ENCODE measurements at regions of chr15 and their contacts with region 1.

Region 1: GRCh38 chr15:32956006-32956405 is 238.2 kb downstream of the GREM1 start:
- DNase-seq: no peak
- H3K4me3 ChIP-seq: no peak overlapping the region
- H3K27ac ChIP-seq: no peak overlapping the region
- H3K4me1 ChIP-seq: peaks cover 2% of the 10 kb centered on the region
- H3K27me3 ChIP-seq: no peaks in the 10 kb centered on the region
- CTCF ChIP-seq: peak in 2 of 4 experiments; percentile 22 to 47
- POLR2A ChIP-seq: no peak

Region 2: DNA sequence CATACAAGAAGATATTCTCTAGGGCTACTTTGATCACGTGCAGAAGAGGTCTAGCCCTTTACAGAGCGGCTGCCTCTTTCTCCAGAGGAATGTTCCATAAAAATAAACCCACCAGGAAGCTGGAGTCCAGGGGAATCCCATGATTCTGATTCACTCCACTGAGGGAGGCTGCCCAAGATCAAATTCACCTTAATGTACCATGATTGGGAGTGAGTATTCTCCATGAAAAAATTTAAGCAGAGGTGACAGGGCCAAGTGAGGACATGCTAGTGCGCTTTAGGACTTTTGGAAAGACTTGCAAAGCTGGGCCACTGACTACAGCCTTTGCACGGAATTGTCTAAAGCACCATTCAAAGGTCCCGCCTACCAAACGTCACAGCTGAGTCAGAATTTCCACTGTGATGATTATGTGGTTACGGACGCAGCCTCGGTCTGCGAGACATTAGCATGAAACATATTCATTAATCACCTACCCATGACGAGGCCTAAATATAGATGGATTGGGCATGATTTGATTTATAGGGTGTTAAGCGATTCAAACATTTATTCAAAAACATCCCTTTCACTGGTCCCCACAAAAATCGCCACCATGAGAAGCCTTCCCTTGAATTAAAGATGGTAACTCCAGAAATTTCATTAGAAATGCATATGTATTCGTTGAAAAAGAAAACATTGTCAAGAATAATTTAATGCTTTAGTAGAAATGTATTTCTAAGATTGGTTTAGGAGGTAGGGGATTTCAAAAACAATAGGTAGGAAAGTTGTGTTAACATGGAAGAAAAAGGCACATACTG is 85.6 kb before region 1 on chr15:
- intact Hi-C with region 1: loop called (anchors 5 kb)
- DNase-seq: no peak
- H3K4me3 ChIP-seq: no peak overlapping the region
- H3K27ac ChIP-seq: no peak overlapping the region
- H3K4me1 ChIP-seq: peaks cover 4% of the 10 kb centered on the region
- H3K27me3 ChIP-seq: no peaks in the 10 kb centered on the region
- CTCF ChIP-seq: no peak
- POLR2A ChIP-seq: no peak